OCI-LY7 (cell line): ENCODE measurements at regions of chr9 and their contacts with region 1.

Region 1: GRCh38 chr9:33024966-33025571 is at the start of gene DNAJA1:
- DNase-seq: peak; percentile 95
- H3K4me3 ChIP-seq: peak within 1 kb of the TSS; percentile 100
- H3K27ac ChIP-seq: peak within 1 kb of the TSS; percentile 79
- H3K4me1 ChIP-seq: peaks cover 59% of the 10 kb centered on the region
- CTCF ChIP-seq: no peak
- total RNA-seq, gene DNAJA1: 110 and 136 TPM in 2 replicates

Region 2: DNA sequence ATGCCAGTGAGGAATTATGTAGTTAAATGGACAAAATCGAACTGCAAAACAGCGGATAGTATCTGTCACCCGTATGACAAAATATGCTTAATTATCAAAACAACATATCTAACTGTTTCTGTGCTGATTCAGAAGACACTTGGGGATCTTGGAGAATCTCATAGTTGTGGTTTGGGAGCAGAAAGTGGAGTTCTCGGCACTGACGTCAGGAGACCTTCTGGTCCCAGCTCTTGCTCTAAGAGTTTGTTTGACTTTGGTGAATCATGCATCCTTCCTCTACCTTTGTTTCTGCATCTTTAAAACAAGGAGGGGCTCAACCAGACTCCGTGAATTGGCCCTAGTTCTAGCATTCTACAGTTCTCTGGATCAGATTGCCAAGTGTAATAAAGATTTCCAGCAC is 352.6 kb before region 1 on chr9:
- CTCF ChIA-PET with region 1: no interaction called
- POLR2A ChIA-PET with region 1: no interaction called
- intact Hi-C with region 1: no loop called
- DNase-seq: no peak
- H3K4me3 ChIP-seq: no peak overlapping the region
- H3K27ac ChIP-seq: no peak overlapping the region
- H3K4me1 ChIP-seq: no peaks in the 10 kb centered on the region
- CTCF ChIP-seq: no peak

Region 3: GRCh38 chr9:33007755-33008154 is 17.3 kb before region 1 on chr9:
- CTCF ChIA-PET with region 1: no interaction called
- POLR2A ChIA-PET with region 1: interaction called, 15 read pairs
- intact Hi-C with region 1: no loop called
- DNase-seq: no peak
- H3K4me3 ChIP-seq: no peak overlapping the region
- H3K27ac ChIP-seq: no peak overlapping the region
- H3K4me1 ChIP-seq: peaks cover 4% of the 10 kb centered on the region
- CTCF ChIP-seq: no peak

Region 4: DNA sequence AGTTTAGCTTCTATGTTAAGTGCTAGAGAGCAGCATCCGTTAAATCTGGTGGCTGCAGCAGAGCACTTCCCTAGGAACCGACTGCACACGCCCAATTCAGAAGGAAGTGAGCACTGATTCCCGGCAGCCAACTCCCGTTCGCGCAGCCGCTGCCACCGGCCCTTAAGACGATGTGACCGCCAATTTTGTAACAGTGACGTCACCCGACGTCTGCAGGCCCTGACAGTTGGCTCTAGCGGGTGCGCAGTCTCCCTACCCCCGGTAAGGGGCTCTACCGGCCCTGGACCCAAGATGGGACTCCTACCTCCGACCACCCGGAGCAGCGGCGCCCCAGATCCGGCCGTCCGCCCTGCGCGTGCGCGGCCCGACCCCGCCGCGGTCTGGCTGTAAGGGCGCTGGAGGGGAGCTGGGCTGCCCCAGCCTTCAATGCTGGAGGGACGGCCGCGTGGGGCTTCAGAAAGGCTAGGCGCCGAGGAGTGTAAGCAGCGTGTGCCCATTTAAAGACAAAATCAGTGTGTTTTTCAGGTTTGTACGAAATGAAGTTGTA is 19.1 kb after region 1 on chr9:
- CTCF ChIA-PET with region 1: no interaction called
- POLR2A ChIA-PET with region 1: interaction called, 10 read pairs
- intact Hi-C with region 1: no loop called
- DNase-seq: no peak
- H3K4me3 ChIP-seq: no peak overlapping the region
- H3K27ac ChIP-seq: no peak overlapping the region
- H3K4me1 ChIP-seq: no peaks in the 10 kb centered on the region
- CTCF ChIP-seq: no peak

Region 5: GRCh38 chr9:33167046-33167808 is 142.2 kb after region 1 on chr9 and contains the start of gene B4GALT1:
- CTCF ChIA-PET with region 1: interaction called, 3 read pairs
- POLR2A ChIA-PET with region 1: no interaction called
- intact Hi-C with region 1: loop called (anchors 2 kb)
- DNase-seq: peak; percentile 95
- H3K4me3 ChIP-seq: peak within 1 kb of the TSS; percentile 93
- H3K27ac ChIP-seq: peak within 1 kb of the TSS; percentile 68
- H3K4me1 ChIP-seq: peaks cover 49% of the 10 kb centered on the region
- CTCF ChIP-seq: 0 out of 2 replicates have a peak, but pooled peaks have one; percentile 23
- total RNA-seq, gene B4GALT1: 8.1 and 12.8 TPM in 2 replicates